ENCODE measurements at regions of chr10 and their contacts with region 1.

Region 1: DNA sequence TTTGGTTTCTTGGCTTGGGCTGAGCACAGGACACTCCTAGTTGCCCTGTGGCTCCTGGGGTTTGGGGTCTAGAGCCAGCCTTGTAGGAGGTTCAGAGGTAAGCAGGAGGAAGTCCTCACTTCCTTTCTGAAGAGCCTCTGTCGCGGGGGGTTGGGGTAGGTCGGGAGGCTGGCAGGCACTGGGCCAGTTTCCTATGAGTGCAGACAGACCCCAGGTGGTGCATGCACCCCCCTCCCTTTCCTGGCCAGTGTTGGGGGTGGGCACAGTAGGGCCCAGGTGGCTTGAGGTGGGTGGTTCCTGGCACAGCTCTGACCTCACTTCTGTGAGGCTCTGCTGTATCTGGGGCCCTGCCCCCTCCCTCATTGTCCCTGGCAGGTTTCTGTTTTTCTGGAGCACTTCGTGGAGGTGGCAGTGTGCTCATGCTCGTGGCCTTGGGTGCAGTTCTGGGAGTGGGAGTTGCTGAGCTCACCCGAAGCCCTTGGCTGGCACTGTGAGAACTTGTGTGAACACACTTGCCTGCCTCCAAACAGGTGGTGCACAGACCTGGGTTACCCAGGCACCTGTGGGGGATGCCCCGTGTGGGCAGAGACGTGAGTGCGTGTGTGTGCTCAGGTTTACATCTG is 1.8 kb downstream of the PALD1 start:
- DNase-seq: no peak
- ATAC-seq: no peak
- H3K4me3 ChIP-seq: peak overlapping the region in 2 of 4 donors; percentile 56 to 75
- H3K27ac ChIP-seq: peak overlapping the region; percentile 65 to 78 (median 70)
- H3K4me1 ChIP-seq: peaks cover 59 to 62% of the 10 kb centered on the region in 2 donors
- H3K27me3 ChIP-seq: no peaks in the 10 kb centered on the region
- CTCF ChIP-seq: no peak
- POLR2A ChIP-seq: no peak

Region 2: GRCh38 chr10:70391654-70392053 is 88.7 kb before region 1 on chr10:
- in situ Hi-C with region 1: no loop called
- intact Hi-C with region 1: no loop called
- DNase-seq: no peak
- ATAC-seq: no peak
- H3K4me3 ChIP-seq: no peak overlapping the region
- H3K27ac ChIP-seq: no peak overlapping the region
- H3K4me1 ChIP-seq: peaks cover 0 to 6% of the 10 kb centered on the region in 2 donors
- H3K27me3 ChIP-seq: no peaks in the 10 kb centered on the region
- CTCF ChIP-seq: no peak
- POLR2A ChIP-seq: no peak

Region 3: DNA sequence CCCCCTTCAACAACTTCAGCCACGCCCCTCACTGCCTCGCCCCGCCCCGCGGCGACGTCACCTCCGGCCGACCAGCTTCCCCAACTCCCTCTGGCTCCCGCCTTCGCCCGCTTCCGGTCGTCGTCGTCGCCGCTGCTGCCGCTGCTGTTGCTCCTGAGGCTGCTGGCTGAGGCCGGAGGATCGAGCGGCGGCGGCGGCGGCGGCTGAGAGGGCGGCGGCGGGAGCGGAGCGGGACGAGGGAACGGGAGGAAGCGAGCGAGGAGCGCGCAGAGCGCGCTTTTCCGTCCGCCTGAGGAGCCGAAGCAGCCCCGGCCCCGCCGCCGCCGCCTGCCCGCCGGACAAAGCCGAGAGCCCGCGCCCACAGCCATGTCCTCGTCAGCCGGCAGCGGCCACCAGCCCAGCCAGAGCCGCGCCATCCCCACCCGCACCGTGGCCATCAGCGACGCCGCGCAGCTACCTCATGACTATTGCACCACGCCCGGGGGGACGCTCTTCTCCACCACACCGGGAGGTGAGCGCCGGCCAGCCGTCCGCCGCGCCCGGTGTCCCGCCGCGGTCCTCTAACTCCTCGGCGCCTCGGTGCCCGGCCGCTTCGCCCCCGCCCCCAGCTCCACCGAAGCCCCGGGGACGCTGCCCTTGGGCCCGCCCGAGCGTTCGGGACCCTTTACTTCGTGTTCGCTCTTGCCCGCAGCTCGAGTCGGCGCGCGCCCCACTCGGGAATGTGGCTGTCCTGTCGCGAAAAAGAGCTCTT is 76.1 kb before region 1 on chr10 and contains the start of gene EIF4EBP2:
- in situ Hi-C with region 1: no loop called
- intact Hi-C with region 1: loop called (anchors 5 kb)
- DNase-seq: peak; percentile 98 to 99
- ATAC-seq: peak; percentile 76 to 78
- H3K4me3 ChIP-seq: peak within 1 kb of the TSS; percentile 83 to 98 (median 87)
- H3K27ac ChIP-seq: peak within 1 kb of the TSS; percentile 93 to 99 (median 96)
- H3K4me1 ChIP-seq: peaks cover 36 to 42% of the 10 kb centered on the region in 2 donors
- H3K27me3 ChIP-seq: no peaks in the 10 kb centered on the region
- CTCF ChIP-seq: no peak
- POLR2A ChIP-seq: peak; percentile 99
- total RNA-seq, gene EIF4EBP2: 58.4 to 141 (median 107) TPM

Region 4: DNA sequence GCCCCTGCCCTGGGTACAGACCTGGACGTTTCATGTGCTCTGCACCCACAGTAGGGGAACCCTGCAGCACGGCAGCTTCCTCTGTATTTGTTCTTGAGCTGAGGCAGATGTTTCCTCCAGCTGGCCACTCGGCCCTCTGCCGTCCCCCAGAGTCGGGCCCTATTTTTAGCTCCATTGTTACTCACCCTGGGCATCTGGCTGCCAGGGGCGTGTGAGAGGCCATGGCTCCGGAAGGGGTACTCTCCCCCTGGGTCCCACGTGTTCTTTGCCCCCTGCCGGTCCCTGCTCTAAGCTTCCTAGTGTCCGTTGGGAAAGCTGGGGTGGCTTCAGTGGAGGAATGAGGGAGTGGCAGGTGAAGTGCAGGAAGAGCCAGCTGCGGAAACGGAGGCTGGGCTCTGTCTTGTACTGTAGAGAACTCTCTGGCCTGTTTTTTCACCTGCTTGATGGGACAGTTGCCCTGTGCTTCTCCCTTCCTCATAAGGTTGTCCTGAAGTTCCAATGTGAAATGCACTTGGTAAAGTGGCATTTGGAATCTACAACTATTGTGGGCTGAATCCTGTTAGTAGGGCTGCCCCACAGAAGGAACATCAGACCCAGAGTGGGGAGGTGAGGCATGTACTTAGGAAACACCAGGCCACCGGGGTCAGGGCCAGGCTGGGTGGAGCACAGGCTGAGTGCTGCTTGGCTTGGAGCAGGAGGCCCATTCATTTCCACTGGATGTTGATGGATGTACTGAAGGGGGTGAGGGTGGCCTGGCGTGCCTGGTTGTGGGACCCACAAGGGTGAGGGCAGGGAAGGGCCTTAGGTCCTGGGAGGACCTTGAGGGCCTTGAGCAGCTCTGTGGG is 28.8 kb after region 1 on chr10:
- in situ Hi-C with region 1: no loop called
- intact Hi-C with region 1: loop called (anchors 2 kb)
- DNase-seq: peak; percentile 32 to 66
- ATAC-seq: peak; percentile 69
- H3K4me3 ChIP-seq: peak overlapping the region in 2 of 4 donors; percentile 21 to 37
- H3K27ac ChIP-seq: peak overlapping the region; percentile 62 to 79 (median 74)
- H3K4me1 ChIP-seq: peaks cover 55 to 58% of the 10 kb centered on the region in 2 donors
- H3K27me3 ChIP-seq: no peaks in the 10 kb centered on the region
- CTCF ChIP-seq: peak in 1 of 5 experiments; percentile 17
- POLR2A ChIP-seq: no peak

Measured in gastrocnemius medialis (tissue), 4 donors.